ENCODE measurements at regions of chr20 and their contacts with region 1.

Region 1: GRCh38 chr20:12762725-12763124 is 246.0 kb upstream of the SPTLC3 start:
- DNase-seq: no peak
- H3K4me3 ChIP-seq: no peak overlapping the region
- H3K27ac ChIP-seq: no peak overlapping the region; the same call in 1 of the 2 replicates
- H3K4me1 ChIP-seq: peaks cover 0 to 25% (median 11%) of the 10 kb centered on the region in 4 experiments; a peak in 3 of 7 replicates
- H3K27me3 ChIP-seq: no peaks in the 10 kb centered on the region
- CTCF ChIP-seq: no peak
- EP300 ChIP-seq: no peak
- POLR2A ChIP-seq: no peak
- RAD21 ChIP-seq: no peak

Region 2: DNA sequence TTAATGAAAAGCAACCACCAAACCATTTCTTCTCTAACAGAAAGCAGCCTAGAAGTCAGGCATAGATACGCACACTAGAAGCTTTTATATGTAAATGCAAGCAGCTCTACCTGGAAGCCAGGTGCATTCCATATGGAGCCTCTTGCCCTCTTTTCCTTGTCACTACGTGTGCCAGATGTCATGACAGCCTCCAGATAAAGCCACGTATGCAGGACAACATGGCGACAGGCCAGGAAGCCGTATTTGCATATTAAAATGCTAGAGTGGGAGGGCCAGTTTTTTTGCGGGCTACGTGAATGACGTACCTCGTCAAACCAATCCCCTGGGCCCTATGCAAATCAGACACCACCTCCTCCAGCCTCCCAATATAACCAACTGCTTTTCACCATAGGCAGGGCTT is 62.0 kb before region 1 on chr20:
- CTCF ChIA-PET with region 1: no interaction called
- POLR2A ChIA-PET with region 1: no interaction called
- DNase-seq: no peak
- H3K4me3 ChIP-seq: no peak overlapping the region
- H3K27ac ChIP-seq: no peak overlapping the region
- H3K4me1 ChIP-seq: peaks cover 0 to 3% (median under 1%) of the 10 kb centered on the region in 4 experiments; a peak in 2 of 7 replicates
- H3K27me3 ChIP-seq: no peaks in the 10 kb centered on the region
- CTCF ChIP-seq: no peak
- EP300 ChIP-seq: no peak
- POLR2A ChIP-seq: no peak
- RAD21 ChIP-seq: no peak

Region 3: DNA sequence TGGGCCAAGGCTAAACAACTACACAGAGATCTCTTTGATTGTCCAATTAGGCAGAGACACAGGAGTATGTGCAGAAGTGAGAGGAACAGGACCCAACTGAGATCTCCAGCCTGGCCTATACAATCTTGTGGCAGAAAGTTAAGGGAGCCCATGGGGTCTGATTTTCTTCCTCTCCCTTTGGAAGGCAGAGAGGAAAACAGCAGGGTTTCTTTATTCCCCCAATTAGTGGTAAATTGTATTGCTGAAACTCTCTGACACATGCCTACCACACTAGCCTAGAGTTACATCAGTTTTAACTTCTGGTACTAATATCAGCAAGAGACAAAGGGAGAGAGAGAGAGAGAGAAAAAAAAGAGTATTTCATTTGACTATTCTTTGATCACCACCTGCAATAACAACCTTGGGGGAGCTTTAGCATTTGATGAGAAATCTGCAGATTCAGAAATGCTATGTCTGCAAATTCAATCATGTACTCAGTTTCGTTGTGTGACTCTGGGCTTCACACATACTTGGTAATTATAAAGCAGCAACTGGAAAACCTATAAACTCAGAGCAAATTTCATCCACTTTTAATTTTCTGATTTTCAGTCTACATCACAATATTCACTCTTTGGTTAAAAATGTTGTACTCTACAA is 14.2 kb before region 1 on chr20:
- CTCF ChIA-PET with region 1: no interaction called
- POLR2A ChIA-PET with region 1: interaction called, 54 read pairs
- DNase-seq: no peak
- H3K4me3 ChIP-seq: no peak overlapping the region
- H3K27ac ChIP-seq: no peak overlapping the region
- H3K4me1 ChIP-seq: peaks cover 1 to 20% (median 8%) of the 10 kb centered on the region in 4 experiments; a peak in 6 of 7 replicates
- H3K27me3 ChIP-seq: no peaks in the 10 kb centered on the region
- CTCF ChIP-seq: no peak
- EP300 ChIP-seq: no peak
- POLR2A ChIP-seq: no peak
- RAD21 ChIP-seq: no peak

Region 4: GRCh38 chr20:12847872-12848271 is 85.1 kb after region 1 on chr20:
- CTCF ChIA-PET with region 1: no interaction called
- POLR2A ChIA-PET with region 1: no interaction called
- DNase-seq: no peak
- H3K4me3 ChIP-seq: no peak overlapping the region
- H3K27ac ChIP-seq: no peak overlapping the region
- H3K4me1 ChIP-seq: no peaks in the 10 kb centered on the region
- H3K27me3 ChIP-seq: no peaks in the 10 kb centered on the region
- CTCF ChIP-seq: no peak
- EP300 ChIP-seq: no peak
- POLR2A ChIP-seq: no peak
- RAD21 ChIP-seq: no peak

Measured in H1 (cell line).